Dendritic cell treated with granulocyte-macrophage colony-stimulating factor and Interleukin-4, amounts not matched to agents 40 ng/mL and 50 ng/mL, for 4 days (primary cell): ENCODE measurements at regions of chr2 and their contacts with region 1.

Region 1: GRCh38 chr2:26577434-26578112 is 63.6 kb downstream of the CIB4 start:
- H3K4me3 Mint-ChIP-seq: no peak overlapping the region
- H3K27ac Mint-ChIP-seq: no peak overlapping the region
- H3K4me1 Mint-ChIP-seq: no peaks in the 10 kb centered on the region
- H3K27me3 Mint-ChIP-seq: peaks cover 29% of the 10 kb centered on the region

Region 2: DNA sequence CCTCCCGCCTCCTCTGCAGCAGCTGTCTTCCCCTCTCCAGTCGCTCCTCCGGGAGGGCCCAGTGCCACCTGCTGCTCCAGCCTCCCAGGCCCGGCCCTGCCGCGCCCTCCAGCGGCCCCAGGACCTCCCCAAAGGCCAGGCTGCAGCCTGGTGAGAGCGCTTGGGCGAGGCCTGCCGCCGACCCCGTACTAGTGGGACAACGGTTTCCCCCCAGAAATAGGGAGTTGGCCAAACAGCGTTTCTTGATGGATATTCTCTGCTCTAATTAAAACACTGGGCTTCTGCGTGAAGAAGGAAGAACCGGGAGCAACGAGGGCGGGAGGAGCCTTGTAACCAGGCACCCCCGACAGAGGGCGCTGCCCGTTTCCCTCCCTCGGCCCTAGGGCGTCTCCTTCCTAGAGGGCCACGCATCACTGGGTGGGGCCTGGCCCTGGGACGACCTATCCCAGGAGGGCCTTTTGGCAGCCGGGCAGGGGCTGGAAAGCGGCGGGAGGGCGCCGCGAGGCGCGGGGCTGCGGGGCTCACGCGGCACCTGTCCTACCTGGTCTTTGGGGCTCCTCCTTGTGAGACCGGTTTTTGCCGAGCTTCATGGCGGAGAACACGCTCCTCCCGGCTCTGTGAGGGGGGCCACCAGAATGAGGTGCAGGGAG is 74.2 kb before region 1 on chr2:
- intact Hi-C with region 1: loop called (anchors 5 kb)
- H3K4me3 Mint-ChIP-seq: peak overlapping the region; percentile 70
- H3K27ac Mint-ChIP-seq: peak overlapping the region; percentile 57
- H3K4me1 Mint-ChIP-seq: peaks cover 15% of the 10 kb centered on the region
- H3K27me3 Mint-ChIP-seq: peaks cover 15% of the 10 kb centered on the region